SK-N-SH (cell line): ENCODE measurements at regions of chr2 and their contacts with region 1.

Region 1: DNA sequence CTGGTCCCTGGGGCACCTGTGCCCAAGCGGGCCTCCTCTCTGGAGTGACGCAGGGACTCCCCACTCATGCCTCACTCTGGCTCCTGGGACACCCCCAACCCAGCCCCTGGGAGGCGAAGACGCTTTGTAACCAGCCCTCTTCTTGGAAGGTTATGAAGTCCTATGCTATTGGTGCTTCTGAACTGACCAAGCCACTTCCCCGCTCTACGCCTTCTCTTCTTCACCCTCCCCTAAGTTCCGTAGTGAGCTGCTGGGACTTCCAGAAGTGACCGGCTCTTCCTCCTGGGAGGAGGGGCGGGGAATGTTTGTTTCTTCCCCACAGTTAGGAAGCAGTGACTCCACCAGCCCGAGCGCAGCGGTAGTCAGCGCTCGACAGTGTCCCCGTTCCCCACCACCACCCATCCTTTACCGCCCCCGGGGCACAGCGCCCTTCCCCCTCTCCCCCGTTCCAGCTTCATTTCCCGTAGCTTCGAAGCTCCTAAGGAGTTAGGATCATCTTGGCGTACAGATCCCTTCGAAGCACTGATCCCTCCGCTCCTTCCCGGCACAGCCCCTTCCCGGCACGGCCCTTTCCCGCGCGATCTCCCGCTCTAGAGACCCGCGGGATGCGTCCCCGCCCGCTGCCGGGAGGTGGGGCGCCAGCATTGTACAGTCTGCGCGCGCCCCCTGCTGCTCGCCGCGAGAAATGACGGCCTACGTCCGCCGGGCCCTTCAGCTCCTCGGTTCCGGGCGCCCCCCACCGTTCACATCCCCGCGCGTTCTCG is 25.3 kb upstream of the NOTO start:
- DNase-seq: peak; percentile 97
- H3K4me3 ChIP-seq: peak overlapping the region; percentile 57 to 61
- H3K27ac ChIP-seq: no peak overlapping the region
- H3K4me1 ChIP-seq: peaks cover 0 to 30% of the 10 kb centered on the region in 2 experiments; a peak in 1 of 4 replicates
- H3K27me3 ChIP-seq: peaks cover 27% of the 10 kb centered on the region
- CTCF ChIP-seq: peak; percentile 90
- EP300 ChIP-seq: no peak
- RAD21 ChIP-seq: peak; percentile 85

Region 2: GRCh38 chr2:72915907-72916742 is 260.9 kb before region 1 on chr2:
- CTCF ChIA-PET with region 1: interaction called, 17 read pairs
- POLR2A ChIA-PET with region 1: no interaction called
- DNase-seq: peak; percentile 79
- H3K4me3 ChIP-seq: no peak overlapping the region
- H3K27ac ChIP-seq: no peak overlapping the region
- H3K4me1 ChIP-seq: peaks cover 7 to 13% of the 10 kb centered on the region in 2 experiments; a peak in 2 of 4 replicates
- H3K27me3 ChIP-seq: peaks cover 88% of the 10 kb centered on the region
- CTCF ChIP-seq: no peak
- EP300 ChIP-seq: no peak
- RAD21 ChIP-seq: no peak

Region 3: DNA sequence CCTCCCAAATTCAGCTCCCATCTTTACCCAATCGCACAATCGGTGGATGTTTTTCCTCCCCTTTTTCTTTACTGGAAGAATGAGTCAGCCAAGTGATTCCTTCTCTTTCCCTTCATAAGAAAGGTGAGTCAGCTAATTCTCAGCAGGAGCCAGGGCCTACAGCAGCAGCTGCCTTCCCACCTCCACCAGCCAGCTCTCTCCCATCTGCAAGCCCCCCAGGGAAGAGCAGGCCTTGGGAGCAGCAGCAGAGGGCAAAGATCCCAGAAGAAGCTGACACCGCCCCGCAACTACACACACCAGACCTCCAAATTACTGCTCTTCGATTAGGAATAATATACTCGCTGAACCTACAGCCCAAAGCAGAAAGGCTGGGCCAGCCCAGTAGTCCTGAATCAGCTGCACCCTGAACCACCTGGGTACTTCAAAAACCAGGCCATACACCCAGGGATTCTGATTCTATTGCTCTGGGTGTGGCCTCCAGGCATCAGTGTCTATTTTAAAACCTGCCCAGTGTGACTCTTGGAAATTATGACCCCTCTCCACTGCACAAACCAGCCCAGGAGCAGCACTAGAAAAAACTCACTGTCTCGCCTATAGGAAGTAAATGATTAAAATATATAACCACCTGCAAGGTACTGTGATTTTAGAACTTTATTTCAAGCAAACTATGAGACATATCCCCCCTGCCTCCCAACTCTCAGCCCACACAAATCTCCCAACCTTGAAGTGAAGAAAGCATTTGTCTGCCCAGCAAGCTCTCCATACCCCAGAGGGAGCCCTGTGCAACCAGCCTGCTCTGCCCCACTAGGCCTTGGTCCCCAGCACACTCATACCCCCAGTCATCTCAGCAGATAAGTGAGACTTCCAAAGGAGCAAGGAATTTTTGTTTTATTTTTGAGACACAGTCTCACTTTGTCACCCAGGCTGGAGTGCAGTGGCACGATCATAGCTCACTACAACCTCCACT is 112.9 kb before region 1 on chr2:
- CTCF ChIA-PET with region 1: interaction called, 15 read pairs
- POLR2A ChIA-PET with region 1: no interaction called
- DNase-seq: no peak
- H3K4me3 ChIP-seq: no peak overlapping the region
- H3K27ac ChIP-seq: peak overlapping the region; percentile 54 to 83
- H3K4me1 ChIP-seq: peaks cover 4 to 24% of the 10 kb centered on the region in 2 experiments; a peak in 3 of 4 replicates
- H3K27me3 ChIP-seq: no peaks in the 10 kb centered on the region
- CTCF ChIP-seq: no peak
- EP300 ChIP-seq: 0 out of 4 replicates have a peak, but pooled peaks of 1 of the 2 experiments have one; percentile 39
- RAD21 ChIP-seq: no peak

Region 4: GRCh38 chr2:73092146-73092814 is 84.8 kb before region 1 on chr2:
- CTCF ChIA-PET with region 1: interaction called, 77 read pairs
- POLR2A ChIA-PET with region 1: no interaction called
- DNase-seq: no peak
- H3K4me3 ChIP-seq: no peak overlapping the region
- H3K27ac ChIP-seq: 0 out of 4 replicates have a peak overlapping the region, but pooled peaks of 1 of the 2 experiments have one; percentile 93
- H3K4me1 ChIP-seq: peaks cover 18 to 33% of the 10 kb centered on the region in 2 experiments; a peak in 2 of 4 replicates
- H3K27me3 ChIP-seq: no peaks in the 10 kb centered on the region
- CTCF ChIP-seq: no peak
- EP300 ChIP-seq: no peak
- RAD21 ChIP-seq: no peak

Region 5: GRCh38 chr2:73163483-73164367 is 13.3 kb before region 1 on chr2:
- CTCF ChIA-PET with region 1: interaction called, 98 read pairs
- POLR2A ChIA-PET with region 1: no interaction called
- DNase-seq: peak; percentile 88
- H3K4me3 ChIP-seq: no peak overlapping the region; a peak in 1 of 4 replicates
- H3K27ac ChIP-seq: no peak overlapping the region
- H3K4me1 ChIP-seq: no peaks in the 10 kb centered on the region
- H3K27me3 ChIP-seq: no peaks in the 10 kb centered on the region
- CTCF ChIP-seq: peak; percentile 87
- EP300 ChIP-seq: no peak
- RAD21 ChIP-seq: peak; percentile 90

Region 6: DNA sequence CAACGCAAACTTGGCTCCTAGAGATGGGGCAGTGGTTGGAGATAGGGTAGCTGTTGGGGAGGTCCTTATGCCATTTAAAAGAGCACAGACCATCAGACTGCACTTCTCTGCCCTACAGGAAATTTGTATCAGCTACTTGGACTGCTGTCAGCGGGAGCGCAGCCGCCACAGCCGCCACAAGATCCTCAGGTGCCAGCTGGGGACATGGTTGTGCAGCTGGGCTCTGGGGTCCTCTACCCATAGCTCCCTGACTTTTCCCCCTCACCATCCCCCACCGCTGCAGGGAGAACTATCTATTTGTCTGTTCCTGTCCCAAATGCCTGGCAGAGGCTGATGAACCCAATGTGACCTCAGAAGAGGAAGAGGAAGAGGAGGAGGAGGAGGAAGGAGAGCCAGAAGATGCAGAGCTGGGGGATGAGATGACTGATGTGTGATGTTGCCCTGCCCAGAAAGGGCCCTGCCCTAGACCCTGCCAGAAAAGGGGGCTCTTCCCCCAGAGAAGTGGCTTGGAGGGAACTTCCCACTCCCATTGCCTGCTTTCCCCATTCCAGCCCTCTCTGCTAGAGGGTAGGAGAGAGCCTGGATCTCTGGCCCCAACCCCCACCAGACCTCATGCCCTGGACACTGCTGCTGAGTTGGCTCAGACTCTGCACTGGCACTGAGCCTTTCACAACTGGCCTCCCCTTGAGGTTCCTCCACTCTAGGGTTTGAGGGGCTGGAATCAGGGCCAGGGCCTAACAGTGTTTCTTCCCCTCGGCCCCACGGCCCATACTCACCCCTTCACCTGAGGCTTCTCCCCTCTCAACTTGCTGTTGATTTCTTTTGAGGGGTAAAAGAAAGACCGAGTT is 48.7 kb after region 1 on chr2:
- CTCF ChIA-PET with region 1: interaction called, 11 read pairs
- POLR2A ChIA-PET with region 1: no interaction called
- DNase-seq: no peak
- H3K4me3 ChIP-seq: no peak overlapping the region
- H3K27ac ChIP-seq: no peak overlapping the region
- H3K4me1 ChIP-seq: no peaks in the 10 kb centered on the region
- H3K27me3 ChIP-seq: no peaks in the 10 kb centered on the region
- CTCF ChIP-seq: no peak
- EP300 ChIP-seq: no peak
- RAD21 ChIP-seq: no peak

Region 7: GRCh38 chr2:73260034-73260984 is 83.2 kb after region 1 on chr2:
- CTCF ChIA-PET with region 1: no interaction called
- POLR2A ChIA-PET with region 1: no interaction called
- DNase-seq: peak; percentile 74
- H3K4me3 ChIP-seq: no peak overlapping the region
- H3K27ac ChIP-seq: no peak overlapping the region
- H3K4me1 ChIP-seq: no peaks in the 10 kb centered on the region
- H3K27me3 ChIP-seq: no peaks in the 10 kb centered on the region
- CTCF ChIP-seq: peak; percentile 52
- EP300 ChIP-seq: no peak
- RAD21 ChIP-seq: peak; percentile 65

Region 8: DNA sequence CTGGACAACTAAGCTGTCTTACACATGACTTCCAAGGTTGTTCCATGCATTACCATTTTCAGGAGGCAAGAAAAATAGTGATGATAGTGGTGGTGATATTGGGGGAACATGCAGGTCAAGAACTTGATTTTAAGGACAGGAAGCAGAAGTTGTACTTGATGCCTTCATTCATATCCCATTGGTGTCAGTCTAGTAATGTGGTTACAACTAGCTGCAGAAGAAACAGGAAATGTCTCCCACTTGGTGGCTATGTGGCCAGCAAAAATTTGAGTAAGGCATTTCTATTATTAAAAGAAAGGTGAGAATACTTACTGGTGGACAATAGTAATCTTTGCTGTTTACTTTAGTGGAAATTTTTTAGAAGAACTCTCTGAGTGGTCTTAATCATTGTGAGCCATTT is 312.0 kb after region 1 on chr2:
- CTCF ChIA-PET with region 1: no interaction called
- POLR2A ChIA-PET with region 1: no interaction called
- DNase-seq: no peak
- H3K4me3 ChIP-seq: no peak overlapping the region
- H3K27ac ChIP-seq: no peak overlapping the region
- H3K4me1 ChIP-seq: no peaks in the 10 kb centered on the region
- H3K27me3 ChIP-seq: no peaks in the 10 kb centered on the region
- CTCF ChIP-seq: no peak
- EP300 ChIP-seq: no peak
- RAD21 ChIP-seq: no peak